AG04449 (cell line): ENCODE measurements at regions of chr10 and their contacts with region 1.

Region 1: DNA sequence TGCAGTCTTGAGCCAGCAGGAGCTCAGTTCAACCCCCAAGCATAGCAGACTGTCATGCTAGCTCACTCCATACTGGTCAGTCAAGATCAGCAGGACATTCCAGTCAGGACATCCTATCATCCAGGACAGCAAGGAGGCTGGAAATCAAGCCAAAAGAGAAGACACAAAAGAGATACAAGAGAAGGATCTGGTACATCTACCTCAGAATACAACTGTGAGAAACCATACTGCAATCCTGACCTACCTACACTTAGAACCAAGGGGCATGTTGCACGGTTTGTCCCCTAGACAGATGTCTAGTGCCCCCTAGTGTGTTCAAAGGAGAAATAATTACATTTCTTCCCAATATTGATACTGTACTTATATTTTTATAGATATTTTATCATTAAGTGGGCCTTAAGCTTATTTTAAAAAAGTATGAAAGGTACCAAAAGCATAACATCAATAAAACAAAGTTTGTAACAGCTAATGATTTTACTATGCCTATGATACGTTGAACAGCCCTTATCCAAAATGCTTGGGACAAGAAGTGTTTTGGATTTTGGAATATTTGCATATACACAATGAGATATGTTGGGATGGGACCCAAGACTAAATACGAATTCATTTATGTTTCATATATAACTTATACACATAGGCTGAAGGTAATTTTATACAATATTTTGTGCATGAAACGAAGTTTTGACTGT is 26.7 kb downstream of the ERCC6 start:
- DNase-seq: no peak
- H3K4me3 ChIP-seq: no peak overlapping the region
- CTCF ChIP-seq: peak; percentile 55

Region 2: GRCh38 chr10:49500418-49500817 is 11.8 kb before region 1 on chr10:
- CTCF ChIA-PET with region 1: interaction called, 53 read pairs
- POLR2A ChIA-PET with region 1: no interaction called
- DNase-seq: no peak
- H3K4me3 ChIP-seq: no peak overlapping the region
- CTCF ChIP-seq: no peak

Region 3: GRCh38 chr10:49532461-49532860 is 20.2 kb after region 1 on chr10:
- CTCF ChIA-PET with region 1: interaction called, 111 read pairs
- POLR2A ChIA-PET with region 1: no interaction called
- DNase-seq: no peak
- H3K4me3 ChIP-seq: no peak overlapping the region
- CTCF ChIP-seq: no peak

Region 4: DNA sequence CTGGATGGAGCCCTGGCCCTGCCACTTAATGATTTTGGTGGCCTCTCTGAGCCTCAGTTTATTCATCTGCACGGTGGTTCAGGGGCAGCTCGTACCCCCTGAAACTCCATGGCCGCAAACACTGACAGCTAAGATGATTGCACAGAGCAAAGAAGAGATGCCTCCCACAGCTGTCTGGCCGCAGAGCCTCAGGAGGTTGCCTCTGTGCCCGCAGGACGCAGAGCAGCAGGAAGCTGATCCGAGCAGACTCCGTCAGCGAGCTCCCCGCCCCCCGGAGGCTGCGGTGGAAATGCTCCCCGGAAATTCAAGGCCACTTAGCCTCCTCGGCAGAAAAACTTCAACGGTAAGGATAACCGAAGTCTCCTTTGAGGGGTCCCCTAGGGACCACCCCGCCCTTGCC is 137.0 kb after region 1 on chr10:
- CTCF ChIA-PET with region 1: no interaction called
- POLR2A ChIA-PET with region 1: no interaction called
- DNase-seq: no peak
- H3K4me3 ChIP-seq: no peak overlapping the region
- CTCF ChIP-seq: no peak